K562 (cell line): ENCODE measurements at regions of chr5 and their contacts with region 1.

Region 1: DNA sequence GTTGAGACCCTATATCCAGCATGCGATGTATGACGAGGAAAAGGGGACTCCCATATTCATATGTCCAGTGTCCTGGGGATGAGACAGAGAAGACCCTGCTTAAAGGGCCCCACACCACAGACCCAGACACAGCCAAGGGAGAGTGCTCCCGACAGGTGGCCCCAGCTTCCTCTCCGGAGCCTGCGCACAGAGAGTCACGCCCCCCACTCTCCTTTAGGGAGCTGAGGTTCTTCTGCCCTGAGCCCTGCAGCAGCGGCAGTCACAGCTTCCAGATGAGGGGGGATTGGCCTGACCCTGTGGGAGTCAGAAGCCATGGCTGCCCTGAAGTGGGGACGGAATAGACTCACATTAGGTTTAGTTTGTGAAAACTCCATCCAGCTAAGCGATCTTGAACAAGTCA is 17.1 kb downstream of the BTNL3 start:
- DNase-seq: peak in 3 of 4 experiments; percentile 1 to 3 (median 2)
- ATAC-seq: no peak
- H3K4me3 ChIP-seq: no peak overlapping the region
- H3K27ac ChIP-seq: no peak overlapping the region
- H3K4me1 ChIP-seq: peaks cover 5 to 6% of the 10 kb centered on the region in 2 experiments; a peak in 2 of 5 replicates
- H3K27me3 ChIP-seq: no peaks in the 10 kb centered on the region
- CTCF ChIP-seq: no peak
- EP300 ChIP-seq: no peak
- POLR2A ChIP-seq: no peak
- RAD21 ChIP-seq: no peak

Region 2: DNA sequence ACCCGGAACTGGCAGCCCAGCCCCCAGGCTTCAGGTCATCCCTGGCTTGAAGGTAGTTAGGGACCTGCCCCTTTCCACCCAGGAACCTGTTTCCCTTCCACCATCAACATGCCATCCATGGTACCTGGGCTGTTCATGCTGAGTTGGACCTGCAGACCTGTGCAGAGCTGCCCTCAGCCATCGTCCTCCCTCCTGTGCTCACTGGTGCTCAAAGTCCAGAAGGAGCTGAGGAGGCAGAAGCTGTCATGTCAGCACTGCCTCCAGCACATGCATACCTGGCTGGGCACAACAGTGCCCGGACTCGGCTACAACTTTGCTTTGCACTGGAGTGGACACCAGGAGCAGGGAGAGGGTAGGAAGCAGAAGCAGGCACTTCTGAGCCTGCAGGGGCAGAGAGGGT is 70.6 kb before region 1 on chr5:
- CTCF ChIA-PET with region 1: no interaction called
- POLR2A ChIA-PET with region 1: interaction called, 4 read pairs
- in situ Hi-C with region 1: loop called (anchors 5 kb)
- intact Hi-C with region 1: loop called (anchors 10 kb)
- DNase-seq: peak in 1 of 4 experiments; percentile 0
- ATAC-seq: no peak
- H3K4me3 ChIP-seq: no peak overlapping the region
- H3K27ac ChIP-seq: no peak overlapping the region
- H3K4me1 ChIP-seq: no peaks in the 10 kb centered on the region
- H3K27me3 ChIP-seq: no peaks in the 10 kb centered on the region
- CTCF ChIP-seq: no peak
- EP300 ChIP-seq: no peak
- POLR2A ChIP-seq: no peak
- RAD21 ChIP-seq: no peak

Region 3: GRCh38 chr5:180990086-180990881 is 15.5 kb before region 1 on chr5:
- CTCF ChIA-PET with region 1: no interaction called
- POLR2A ChIA-PET with region 1: no interaction called
- in situ Hi-C with region 1: no loop called
- intact Hi-C with region 1: no loop called
- DNase-seq: no peak
- ATAC-seq: no peak
- H3K4me3 ChIP-seq: no peak overlapping the region
- H3K27ac ChIP-seq: no peak overlapping the region
- H3K4me1 ChIP-seq: no peaks in the 10 kb centered on the region
- H3K27me3 ChIP-seq: no peaks in the 10 kb centered on the region
- CTCF ChIP-seq: no peak
- EP300 ChIP-seq: no peak
- POLR2A ChIP-seq: no peak
- RAD21 ChIP-seq: no peak